HEK293 (cell line): ENCODE measurements at regions of chr5 and their contacts with region 1.

Region 1: DNA sequence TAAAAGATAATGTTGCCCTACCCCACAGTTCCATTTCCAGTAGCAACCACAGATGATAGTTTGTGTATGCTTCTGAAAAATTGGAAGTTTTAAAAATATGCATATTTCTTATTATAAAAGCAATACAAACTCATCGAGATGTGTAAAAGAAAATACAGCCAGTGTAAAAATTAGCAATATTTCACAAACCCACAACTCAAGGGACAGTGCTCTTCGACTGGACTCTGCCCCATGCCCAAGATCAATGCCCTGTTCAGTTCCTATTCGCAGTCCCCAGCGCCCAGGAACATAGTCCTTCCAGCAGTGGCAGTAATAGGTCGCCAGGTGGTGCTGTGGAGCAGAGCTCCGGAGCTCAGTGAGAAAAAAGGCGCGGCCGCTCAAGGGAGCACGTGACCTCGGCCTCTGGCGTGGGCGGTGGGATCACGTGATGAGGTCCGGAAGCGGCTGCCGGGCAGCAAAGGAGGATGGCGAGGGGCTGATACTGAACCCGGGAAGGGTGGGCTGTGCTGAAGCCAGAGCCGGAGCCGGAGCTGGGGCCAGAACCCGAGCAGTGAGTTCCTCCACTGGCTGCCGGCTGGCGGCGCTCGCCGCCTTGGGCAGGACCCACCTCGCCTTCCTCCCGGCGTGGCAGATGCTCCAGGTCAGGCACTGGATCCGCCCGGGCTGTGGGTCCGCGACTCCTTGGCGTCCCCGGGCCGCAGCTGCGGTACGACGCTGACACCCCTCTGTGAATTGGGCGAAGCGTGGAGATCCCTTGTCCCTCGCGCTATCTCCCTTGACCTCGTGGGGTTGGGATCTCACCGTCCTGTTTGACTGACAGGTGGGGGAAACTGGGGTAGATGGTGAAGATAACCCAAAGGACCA is at the start of gene SLC36A1:
- H3K4me3 ChIP-seq: peak within 1 kb of the TSS; percentile 63
- H3K27ac ChIP-seq: no peak within 1 kb of the TSS
- H3K4me1 ChIP-seq: peaks cover 5% of the 10 kb centered on the region
- CTCF ChIP-seq: peak; percentile 91

Region 2: DNA sequence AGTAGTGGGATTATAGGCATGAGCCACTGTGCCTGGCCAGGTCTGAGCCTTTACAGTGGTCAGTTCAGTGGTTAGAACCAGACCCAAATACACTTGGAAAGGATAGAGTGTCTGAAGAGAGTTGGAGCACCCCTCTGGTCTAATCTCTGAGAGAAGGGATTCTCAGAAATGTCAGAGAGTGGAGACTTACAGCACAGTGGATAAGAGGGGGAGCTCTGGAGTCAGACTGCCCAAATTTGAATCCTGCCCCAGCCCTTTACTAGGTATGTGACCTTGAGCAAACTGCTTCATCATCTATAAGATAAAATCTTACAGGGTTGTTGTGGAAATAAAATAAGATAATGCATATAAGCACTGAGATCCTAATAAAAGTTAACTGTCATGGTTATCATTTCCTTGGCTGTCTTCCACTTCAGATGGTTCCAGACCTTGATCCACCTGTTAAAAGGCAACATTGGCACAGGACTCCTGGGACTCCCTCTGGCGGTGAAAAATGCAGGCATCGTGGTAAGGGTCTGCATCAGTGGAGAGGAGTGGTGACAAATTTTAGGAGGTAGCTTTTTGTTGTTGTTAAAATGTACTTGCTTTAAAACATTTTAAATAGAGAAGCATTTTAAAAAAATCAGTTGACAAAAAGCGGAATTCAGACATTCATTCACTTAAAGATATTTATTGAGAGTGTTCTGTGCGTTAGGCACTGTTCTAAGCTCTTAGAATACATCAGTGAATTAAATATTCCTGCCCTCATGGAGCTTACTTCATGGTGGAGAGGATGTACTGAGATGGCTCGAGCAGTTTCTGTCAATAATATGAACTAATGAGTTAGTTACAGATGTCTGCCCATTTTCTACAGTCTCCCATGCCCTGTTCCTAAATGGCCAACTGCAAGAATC is 16.0 kb after region 1 on chr5:
- CTCF ChIA-PET with region 1: interaction called, 21 read pairs
- POLR2A ChIA-PET with region 1: interaction called, 5 read pairs
- H3K4me3 ChIP-seq: no peak overlapping the region
- H3K27ac ChIP-seq: no peak overlapping the region
- H3K4me1 ChIP-seq: no peaks in the 10 kb centered on the region
- CTCF ChIP-seq: no peak

Region 3: DNA sequence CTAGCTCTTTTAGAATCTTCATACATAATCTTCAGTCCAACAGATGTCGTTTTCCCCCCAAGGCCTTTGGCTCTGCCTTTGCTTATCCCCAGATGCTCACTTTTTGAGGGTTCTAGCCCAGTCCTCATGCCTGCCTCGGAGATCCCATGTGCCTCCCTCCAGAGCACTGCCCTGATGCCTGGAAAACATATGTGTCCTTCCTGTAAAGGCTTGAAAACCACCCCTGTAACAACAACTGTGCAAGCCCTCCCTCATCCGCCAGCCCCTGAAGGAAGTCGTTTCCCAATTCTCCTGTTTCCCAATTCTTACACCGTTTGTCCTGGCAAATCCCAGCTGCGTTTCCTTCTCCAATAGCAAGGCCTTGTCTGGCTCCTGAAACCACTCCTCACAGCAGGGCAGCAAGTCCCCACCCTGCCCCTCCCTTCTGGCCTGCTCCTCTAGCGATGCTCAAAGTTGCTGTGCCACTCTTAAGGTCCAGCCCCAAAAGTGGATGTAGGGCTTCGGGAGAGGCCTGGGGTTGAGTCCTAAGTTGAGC is 52.2 kb after region 1 on chr5:
- CTCF ChIA-PET with region 1: interaction called, 11 read pairs
- POLR2A ChIA-PET with region 1: no interaction called
- H3K4me3 ChIP-seq: no peak overlapping the region
- H3K27ac ChIP-seq: no peak overlapping the region
- H3K4me1 ChIP-seq: no peaks in the 10 kb centered on the region
- CTCF ChIP-seq: no peak

Region 4: DNA sequence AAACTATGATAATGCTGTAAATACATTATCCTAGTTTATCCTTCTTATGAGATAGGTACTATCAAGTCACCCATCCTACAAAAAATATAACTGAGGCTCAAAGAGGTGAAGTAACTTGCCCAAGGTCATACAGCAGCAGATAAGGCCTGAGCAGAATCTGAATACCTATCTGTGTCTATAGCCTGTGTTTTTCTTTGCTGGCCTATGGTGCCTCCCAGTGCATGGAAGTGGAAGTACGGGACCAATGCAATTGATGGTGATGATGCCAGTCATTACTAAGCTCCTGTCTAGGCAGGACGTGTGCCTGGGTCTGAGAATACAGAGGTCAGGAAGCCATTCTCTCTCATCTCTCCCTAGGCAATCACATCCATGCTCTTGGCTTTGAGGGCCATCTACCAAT is 75.9 kb after region 1 on chr5:
- CTCF ChIA-PET with region 1: interaction called, 10 read pairs
- POLR2A ChIA-PET with region 1: interaction called, 4 read pairs
- H3K4me3 ChIP-seq: no peak overlapping the region
- H3K27ac ChIP-seq: no peak overlapping the region
- H3K4me1 ChIP-seq: no peaks in the 10 kb centered on the region
- CTCF ChIP-seq: peak; percentile 57; the same call in 1 of the 2 replicates